ENCODE measurements at regions of chr6 and their contacts with region 1.

Region 1: GRCh38 chr6:37499433-37500293 is at the start of gene CCDC167:
- DNase-seq: peak; percentile 93
- H3K4me3 ChIP-seq: peak within 1 kb of the TSS; percentile 83
- H3K27ac ChIP-seq: peak within 1 kb of the TSS; percentile 2
- H3K27me3 ChIP-seq: peaks cover 7% of the 10 kb centered on the region
- CTCF ChIP-seq: no peak
- polyA plus RNA-seq, gene CCDC167: 27.3 and 33.3 TPM in 2 replicates

Region 2: DNA sequence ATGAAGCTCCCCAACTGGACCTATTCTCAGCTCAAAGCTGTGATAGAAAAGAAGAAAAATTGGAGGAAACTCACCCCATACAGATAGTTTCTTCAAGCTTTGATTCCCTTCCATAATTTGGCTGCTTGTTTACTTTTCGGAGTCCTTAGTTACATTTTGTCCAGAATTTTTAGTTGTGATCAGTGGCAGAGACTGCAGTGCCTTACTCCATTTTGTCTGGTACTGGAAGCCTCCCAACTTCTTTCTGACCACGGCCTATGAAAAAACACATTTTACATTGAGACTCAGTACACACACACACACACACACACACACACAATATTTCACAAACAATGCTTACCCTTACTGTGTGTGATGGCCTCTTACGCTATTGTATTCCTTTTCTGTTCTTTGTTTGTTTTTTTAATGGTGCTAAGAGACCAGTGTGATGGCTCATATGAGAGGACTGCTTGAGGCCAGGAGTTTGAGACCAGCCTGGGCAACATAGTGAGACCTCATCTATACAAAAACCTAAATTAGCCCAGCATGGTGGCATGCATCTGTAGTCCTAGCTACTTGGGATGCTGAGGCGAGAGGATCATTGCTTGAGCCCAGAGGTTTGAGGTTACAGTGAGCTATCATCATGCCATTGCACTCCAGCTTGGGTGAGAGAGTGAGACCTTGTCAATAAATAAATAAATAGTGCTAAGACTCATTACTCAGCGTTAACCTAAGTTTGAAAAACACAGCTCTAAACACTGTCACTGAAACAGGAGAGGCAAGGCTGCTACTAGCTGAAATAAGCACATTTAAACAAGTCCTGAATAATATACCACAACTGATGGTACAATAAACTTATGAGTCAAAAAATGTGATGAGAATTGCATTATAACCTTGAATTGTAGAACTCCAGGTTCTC is 159.7 kb before region 1 on chr6:
- CTCF ChIA-PET with region 1: no interaction called
- POLR2A ChIA-PET with region 1: no interaction called
- DNase-seq: no peak
- H3K4me3 ChIP-seq: no peak overlapping the region
- H3K27ac ChIP-seq: peak overlapping the region; percentile 31
- H3K27me3 ChIP-seq: no peaks in the 10 kb centered on the region
- CTCF ChIP-seq: no peak

Region 3: GRCh38 chr6:37418722-37419121 is 80.9 kb before region 1 on chr6:
- CTCF ChIA-PET with region 1: no interaction called
- POLR2A ChIA-PET with region 1: no interaction called
- DNase-seq: no peak
- H3K4me3 ChIP-seq: no peak overlapping the region
- H3K27ac ChIP-seq: no peak overlapping the region
- H3K27me3 ChIP-seq: peaks cover 6% of the 10 kb centered on the region
- CTCF ChIP-seq: no peak

Region 4: DNA sequence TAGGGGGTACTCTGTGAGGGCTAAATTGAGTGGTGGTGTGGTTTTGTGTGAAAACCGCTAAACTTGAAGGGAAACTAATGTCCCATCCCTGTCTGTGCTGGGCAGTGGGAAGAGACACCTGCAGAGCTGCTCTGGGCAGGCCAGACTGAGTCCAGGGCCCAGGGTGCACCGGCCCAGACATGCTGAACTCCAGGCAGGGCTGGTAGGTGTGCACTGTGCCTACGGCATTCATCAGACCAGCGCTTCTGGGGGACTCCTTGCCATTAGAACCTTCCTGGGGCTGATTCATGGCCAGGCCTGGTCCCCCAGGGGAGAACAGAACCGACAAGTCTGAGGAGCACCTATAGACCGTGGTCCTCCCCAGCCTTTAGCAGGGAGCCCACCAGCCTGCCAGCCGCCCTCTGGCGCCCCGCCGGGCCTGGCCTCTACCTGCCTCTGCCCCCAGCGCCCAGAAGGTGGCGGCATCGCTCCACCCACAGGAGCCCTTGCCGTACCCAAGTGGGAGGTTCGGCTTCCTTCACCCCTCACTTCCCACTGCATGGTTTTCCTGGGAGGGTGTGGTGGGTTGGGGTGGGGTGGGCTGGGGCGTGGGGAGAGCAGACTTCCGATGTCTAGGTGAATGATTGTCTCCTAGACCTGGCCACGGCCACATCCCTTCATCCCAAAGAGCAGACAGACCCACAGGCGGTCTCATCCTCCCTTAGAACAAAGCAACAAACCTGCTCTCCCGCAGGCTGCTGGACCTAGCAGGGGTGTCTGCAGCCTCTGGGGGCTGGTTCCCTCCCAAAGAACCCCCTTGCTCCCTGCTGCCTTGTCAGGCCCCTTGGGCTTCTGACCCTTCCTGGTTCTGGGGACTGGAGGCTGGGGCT is 15.5 kb before region 1 on chr6:
- CTCF ChIA-PET with region 1: interaction called, 10 read pairs
- POLR2A ChIA-PET with region 1: no interaction called
- DNase-seq: no peak
- H3K4me3 ChIP-seq: no peak overlapping the region
- H3K27ac ChIP-seq: no peak overlapping the region
- H3K27me3 ChIP-seq: no peaks in the 10 kb centered on the region
- CTCF ChIP-seq: peak; percentile 82

Measured in AG04450 (cell line).